CD8-positive, alpha-beta memory T cell (primary cell): ENCODE measurements at regions of chr2 and their contacts with region 1.

Region 1: DNA sequence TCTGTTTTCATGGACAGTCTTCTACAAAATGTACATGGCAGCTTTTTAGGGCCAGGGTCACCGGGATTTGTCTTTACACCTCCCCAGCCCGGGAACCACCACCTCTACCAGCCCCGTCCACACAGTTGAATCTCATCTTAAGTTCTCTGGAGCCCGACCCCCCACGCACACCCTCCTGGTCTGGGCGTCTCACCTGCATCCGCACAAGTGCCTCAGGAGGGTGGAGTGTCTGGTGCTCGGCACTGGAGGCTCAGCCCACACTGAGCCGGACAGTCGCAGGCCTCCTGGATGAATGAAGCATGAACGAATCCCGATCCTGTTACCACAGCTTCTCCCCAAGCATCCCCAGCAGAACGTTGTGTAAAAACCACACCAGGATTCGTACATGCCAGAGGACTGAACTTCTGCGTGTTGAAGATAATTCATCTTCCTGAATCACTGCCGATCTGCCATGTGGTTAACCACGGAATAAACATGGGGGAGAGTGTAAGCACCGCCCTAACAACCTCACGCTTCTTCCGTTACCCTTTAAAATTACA is 162.0 kb downstream of the RTP5 start:
- DNase-seq: peak; percentile 30 to 82 (median 78)
- H3K4me3 ChIP-seq: peak overlapping the region; percentile 81
- H3K4me3 Mint-ChIP-seq: peak overlapping the region; percentile 87 to 92 (median 89)
- H3K27ac ChIP-seq: no peak overlapping the region
- H3K27ac Mint-ChIP-seq: peak overlapping the region; percentile 81 to 95 (median 92)
- H3K4me1 ChIP-seq: peaks cover 29% of the 10 kb centered on the region
- H3K4me1 Mint-ChIP-seq: peaks cover 48 to 59% (median 59%) of the 10 kb centered on the region in 3 donors
- H3K27me3 ChIP-seq: peaks cover 2% of the 10 kb centered on the region
- H3K27me3 Mint-ChIP-seq: peaks cover 13 to 38% of the 10 kb centered on the region in 2 donors

Region 2: GRCh38 chr2:241853651-241854341 is 177.8 kb before region 1 on chr2:
- CTCF ChIA-PET with region 1: no interaction called
- POLR2A ChIA-PET with region 1: no interaction called
- DNase-seq: peak in 1 of 5 donors; percentile 46
- H3K4me3 ChIP-seq: no peak overlapping the region
- H3K4me3 Mint-ChIP-seq: peak overlapping the region in 1 of 7 donors; percentile 40
- H3K27ac ChIP-seq: no peak overlapping the region
- H3K27ac Mint-ChIP-seq: peak overlapping the region in 2 of 8 donors; percentile 17 to 90
- H3K4me1 ChIP-seq: peaks cover 15% of the 10 kb centered on the region
- H3K4me1 Mint-ChIP-seq: peaks cover 21 to 35% (median 21%) of the 10 kb centered on the region in 3 donors
- H3K27me3 ChIP-seq: no peaks in the 10 kb centered on the region
- H3K27me3 Mint-ChIP-seq: no peaks in the 10 kb centered on the region

Region 3: GRCh38 chr2:242020196-242021004 is 11.2 kb before region 1 on chr2:
- CTCF ChIA-PET with region 1: interaction called, 15 read pairs
- POLR2A ChIA-PET with region 1: no interaction called
- DNase-seq: no peak
- H3K4me3 ChIP-seq: no peak overlapping the region
- H3K4me3 Mint-ChIP-seq: no peak overlapping the region
- H3K27ac ChIP-seq: no peak overlapping the region
- H3K27ac Mint-ChIP-seq: peak overlapping the region in 2 of 8 donors; percentile 40 to 64
- H3K4me1 ChIP-seq: no peaks in the 10 kb centered on the region
- H3K4me1 Mint-ChIP-seq: peaks cover 4 to 9% (median 7%) of the 10 kb centered on the region in 3 donors
- H3K27me3 ChIP-seq: no peaks in the 10 kb centered on the region
- H3K27me3 Mint-ChIP-seq: peaks cover 31 to 41% of the 10 kb centered on the region in 2 donors

Region 4: GRCh38 chr2:242088471-242089212 is 57.1 kb after region 1 on chr2:
- CTCF ChIA-PET with region 1: no interaction called
- POLR2A ChIA-PET with region 1: no interaction called
- DNase-seq: peak; percentile 91 to 96 (median 93)
- H3K4me3 ChIP-seq: peak overlapping the region; percentile 28
- H3K4me3 Mint-ChIP-seq: peak overlapping the region; percentile 84 to 97 (median 89)
- H3K27ac ChIP-seq: peak overlapping the region; percentile 9
- H3K27ac Mint-ChIP-seq: peak overlapping the region; percentile 81 to 97 (median 92)
- H3K4me1 ChIP-seq: peaks cover 12% of the 10 kb centered on the region
- H3K4me1 Mint-ChIP-seq: peaks cover 32 to 48% (median 46%) of the 10 kb centered on the region in 3 donors
- H3K27me3 ChIP-seq: no peaks in the 10 kb centered on the region
- H3K27me3 Mint-ChIP-seq: no peaks in the 10 kb centered on the region